Colonic mucosa (tissue), 4 donors: ENCODE measurements at regions of chr2 and their contacts with region 1.

Region 1: DNA sequence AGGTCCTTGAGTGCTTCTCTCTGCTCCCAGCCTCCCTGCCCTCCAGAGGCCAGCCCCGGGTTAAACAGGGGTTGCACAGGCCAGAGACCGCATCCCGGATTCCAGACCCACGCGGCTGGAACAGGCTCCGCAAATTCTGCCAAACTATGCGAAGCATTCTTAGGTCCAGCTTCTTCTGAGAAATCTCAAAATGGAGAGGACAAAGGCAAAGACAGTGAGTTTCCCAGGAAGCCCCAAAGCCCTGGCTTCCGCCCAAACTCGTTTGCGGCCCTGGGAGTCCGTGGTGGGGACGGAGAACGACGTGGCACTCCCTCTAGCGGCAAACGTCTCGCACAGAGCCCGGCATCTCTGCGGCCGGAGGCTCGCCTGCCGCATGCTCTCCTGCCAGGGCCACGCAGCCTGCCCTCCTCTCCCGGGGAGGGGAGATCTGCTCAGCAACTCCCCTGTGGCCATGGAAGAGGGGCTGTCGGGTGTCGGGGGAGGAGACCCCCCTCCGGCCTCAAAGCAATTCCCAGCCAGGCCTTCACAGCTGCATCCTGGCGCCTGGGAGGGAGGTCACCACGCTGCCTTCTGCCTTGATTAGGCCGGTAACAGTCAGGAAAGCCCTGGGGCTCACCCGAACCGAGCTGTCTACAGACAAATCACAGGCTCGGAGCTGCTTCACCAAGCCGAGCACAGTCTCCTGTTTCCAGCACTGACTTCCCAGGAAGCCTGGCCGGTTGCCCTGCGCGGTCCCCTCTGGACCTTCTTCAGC is 33.4 kb upstream of the KLHL29 start:
- DNase-seq: peak; percentile 77
- H3K4me3 ChIP-seq: no peak overlapping the region
- H3K27ac ChIP-seq: no peak overlapping the region
- H3K4me1 ChIP-seq: no peaks in the 10 kb centered on the region
- H3K27me3 ChIP-seq: no peaks in the 10 kb centered on the region
- CTCF ChIP-seq: peak; percentile 80

Region 2: DNA sequence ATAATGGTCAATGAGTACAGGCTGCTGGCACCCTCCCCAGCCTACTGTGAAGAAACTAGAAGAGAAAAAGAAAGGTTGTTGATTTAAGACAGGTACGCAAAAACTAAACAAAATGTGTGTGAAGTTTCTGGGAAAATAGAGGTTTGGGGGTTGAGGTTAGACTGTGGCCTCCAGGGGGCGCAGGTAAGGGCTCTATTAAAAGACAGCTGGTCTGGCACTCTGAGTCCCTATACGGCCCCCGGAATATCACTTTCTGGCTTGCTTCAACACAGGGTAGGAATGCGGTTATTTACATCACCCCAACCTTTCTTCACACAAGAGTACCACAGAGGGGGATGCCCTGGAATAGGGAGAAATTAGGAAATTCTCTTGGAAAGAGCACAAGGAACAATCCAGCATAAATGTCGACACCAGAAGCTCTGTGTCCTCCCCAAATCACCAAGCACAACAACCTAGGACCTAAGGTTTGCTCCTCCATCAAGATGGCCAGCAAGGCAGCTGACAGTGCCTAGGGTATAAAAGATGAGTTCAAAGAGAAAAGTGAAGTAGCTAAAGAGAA is 447.4 kb before region 1 on chr2:
- intact Hi-C with region 1: loop called (anchors 10 kb)
- DNase-seq: peak; percentile 41
- H3K4me3 ChIP-seq: no peak overlapping the region
- H3K27ac ChIP-seq: no peak overlapping the region
- H3K4me1 ChIP-seq: no peaks in the 10 kb centered on the region
- H3K27me3 ChIP-seq: no peaks in the 10 kb centered on the region
- CTCF ChIP-seq: peak; percentile 35

Region 3: GRCh38 chr2:23028106-23028505 is 323.5 kb before region 1 on chr2:
- intact Hi-C with region 1: loop called (anchors 10 kb)
- DNase-seq: no peak
- H3K4me3 ChIP-seq: no peak overlapping the region
- H3K27ac ChIP-seq: no peak overlapping the region
- H3K4me1 ChIP-seq: no peaks in the 10 kb centered on the region
- H3K27me3 ChIP-seq: no peaks in the 10 kb centered on the region
- CTCF ChIP-seq: no peak